HAP-1 (cell line): ENCODE measurements at regions of chr1 and their contacts with region 1.

Region 1: GRCh38 chr1:234842726-234843641 is 233.0 kb upstream of the IRF2BP2 start:
- DNase-seq: no peak
- H3K4me3 ChIP-seq: no peak overlapping the region
- H3K4me1 ChIP-seq: no peaks in the 10 kb centered on the region; the same call in none of the 2 replicates
- H3K27me3 ChIP-seq: peaks cover 12% of the 10 kb centered on the region

Region 2: DNA sequence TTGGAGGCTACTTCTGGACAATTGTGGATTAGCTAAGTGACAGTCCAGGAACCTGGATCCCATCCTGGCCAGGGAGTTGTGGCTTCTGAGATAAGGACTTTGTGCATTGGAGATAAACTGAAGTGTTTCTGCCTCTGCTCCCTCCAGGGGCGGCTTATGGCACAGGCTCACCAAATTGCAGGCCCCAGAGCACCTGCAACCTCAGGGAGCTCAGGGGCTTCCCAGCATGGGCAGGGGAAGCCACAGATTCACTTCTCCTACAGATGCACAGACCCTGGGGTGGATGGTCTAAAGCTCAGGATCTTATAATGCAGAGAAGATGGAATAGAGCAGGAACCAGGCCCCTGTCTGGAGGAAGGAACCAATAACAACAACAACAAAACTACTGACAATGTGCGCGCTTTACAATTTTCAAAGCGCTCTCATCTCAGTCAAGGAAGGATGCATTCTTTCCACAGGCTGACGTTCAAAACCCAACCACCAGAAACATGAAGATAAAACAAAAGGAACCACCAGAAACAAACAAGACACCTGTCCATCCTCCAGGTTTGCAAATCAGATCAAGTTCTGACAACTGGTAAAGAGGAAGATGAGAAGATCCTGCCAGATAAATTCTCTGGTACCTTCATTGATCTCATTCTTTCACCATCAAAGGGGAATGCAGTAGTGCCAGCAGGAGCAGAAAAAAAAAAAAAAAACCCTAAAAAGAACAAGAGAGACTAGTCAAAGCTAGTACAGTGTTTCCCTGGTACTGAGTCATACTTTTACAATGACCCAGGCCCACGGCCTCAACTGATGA is 112.0 kb before region 1 on chr1:
- in situ Hi-C with region 1: loop called (anchors 25 kb)
- DNase-seq: no peak
- H3K4me3 ChIP-seq: no peak overlapping the region
- H3K4me1 ChIP-seq: no peaks in the 10 kb centered on the region
- H3K27me3 ChIP-seq: no peaks in the 10 kb centered on the region